ENCODE measurements at regions of chr14 and their contacts with region 1.

Region 1: GRCh38 chr14:38255673-38256532 is at the start of gene CLEC14A:
- DNase-seq: peak in 1 of 2 donors; percentile 53
- H3K4me3 ChIP-seq: peak within 1 kb of the TSS; percentile 45 to 64 (median 47)
- H3K27ac ChIP-seq: peak within 1 kb of the TSS; percentile 46 to 83
- H3K4me1 ChIP-seq: no peaks in the 10 kb centered on the region
- H3K27me3 ChIP-seq: peaks cover 5 to 21% of the 10 kb centered on the region in 2 donors
- CTCF ChIP-seq: no peak
- POLR2A ChIP-seq: no peak
- total RNA-seq, gene CLEC14A: 11.9 to 25.6 (median 24.8) TPM

Region 2: GRCh38 chr14:36901861-36902260 is 1354.0 kb before region 1 on chr14:
- intact Hi-C with region 1: no loop called
- DNase-seq: no peak
- H3K4me3 ChIP-seq: no peak overlapping the region
- H3K27ac ChIP-seq: no peak overlapping the region
- H3K4me1 ChIP-seq: no peaks in the 10 kb centered on the region
- H3K27me3 ChIP-seq: no peaks in the 10 kb centered on the region
- CTCF ChIP-seq: no peak
- POLR2A ChIP-seq: no peak

Region 3: GRCh38 chr14:37844614-37845013 is 411.3 kb before region 1 on chr14:
- intact Hi-C with region 1: loop called (anchors 5 kb)
- DNase-seq: no peak
- H3K4me3 ChIP-seq: no peak overlapping the region
- H3K27ac ChIP-seq: no peak overlapping the region
- H3K4me1 ChIP-seq: no peaks in the 10 kb centered on the region
- H3K27me3 ChIP-seq: no peaks in the 10 kb centered on the region
- CTCF ChIP-seq: no peak
- POLR2A ChIP-seq: no peak

Region 4: GRCh38 chr14:38125481-38126037 is 130.3 kb before region 1 on chr14:
- intact Hi-C with region 1: no loop called
- DNase-seq: no peak
- H3K4me3 ChIP-seq: no peak overlapping the region
- H3K27ac ChIP-seq: no peak overlapping the region
- H3K4me1 ChIP-seq: no peaks in the 10 kb centered on the region
- H3K27me3 ChIP-seq: no peaks in the 10 kb centered on the region
- CTCF ChIP-seq: no peak
- POLR2A ChIP-seq: no peak

Region 5: DNA sequence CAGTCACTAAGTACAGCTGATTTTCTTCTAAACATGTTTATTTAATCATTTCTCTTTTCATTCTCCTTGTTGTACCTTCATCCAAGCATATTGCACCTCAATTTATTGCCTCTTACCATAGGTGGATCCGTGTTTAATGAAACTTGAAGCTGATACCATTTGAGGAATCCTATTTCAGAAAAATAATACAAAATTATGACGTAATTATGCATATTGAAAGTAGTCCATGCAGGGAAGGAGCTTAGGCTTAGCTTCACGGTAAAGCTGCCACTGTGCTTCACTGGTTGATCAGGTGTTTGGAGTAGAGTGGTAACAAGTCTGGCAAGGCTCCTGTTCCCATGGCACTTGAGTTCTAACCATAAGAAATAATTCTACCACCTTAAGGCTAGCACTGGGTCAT is 61.0 kb after region 1 on chr14:
- intact Hi-C with region 1: no loop called
- DNase-seq: no peak
- H3K4me3 ChIP-seq: no peak overlapping the region
- H3K27ac ChIP-seq: no peak overlapping the region
- H3K4me1 ChIP-seq: no peaks in the 10 kb centered on the region
- H3K27me3 ChIP-seq: no peaks in the 10 kb centered on the region
- CTCF ChIP-seq: no peak
- POLR2A ChIP-seq: no peak

Measured in breast epithelium (tissue), 4 donors.